ENCODE measurements at regions of chr1 and their contacts with region 1.

Region 1: GRCh38 chr1:156096640-156097391 is 14.6 kb upstream of the MEX3A start:
- DNase-seq: peak; percentile 77 to 91 (median 80)
- ATAC-seq: peak; percentile 87
- H3K4me3 ChIP-seq: peak overlapping the region; percentile 10
- H3K4me3 Mint-ChIP-seq: peak overlapping the region; percentile 31 to 83 (median 72)
- H3K27ac ChIP-seq: peak overlapping the region; percentile 63
- H3K27ac Mint-ChIP-seq: peak overlapping the region; percentile 76 to 95 (median 91)
- H3K4me1 ChIP-seq: peaks cover 18 to 22% of the 10 kb centered on the region in 2 donors
- H3K4me1 Mint-ChIP-seq: peaks cover 18 to 45% (median 26%) of the 10 kb centered on the region in 7 donors
- H3K27me3 ChIP-seq: no peaks in the 10 kb centered on the region
- H3K27me3 Mint-ChIP-seq: peaks cover 0 to 52% (median 0%) of the 10 kb centered on the region in 5 donors

Region 2: DNA sequence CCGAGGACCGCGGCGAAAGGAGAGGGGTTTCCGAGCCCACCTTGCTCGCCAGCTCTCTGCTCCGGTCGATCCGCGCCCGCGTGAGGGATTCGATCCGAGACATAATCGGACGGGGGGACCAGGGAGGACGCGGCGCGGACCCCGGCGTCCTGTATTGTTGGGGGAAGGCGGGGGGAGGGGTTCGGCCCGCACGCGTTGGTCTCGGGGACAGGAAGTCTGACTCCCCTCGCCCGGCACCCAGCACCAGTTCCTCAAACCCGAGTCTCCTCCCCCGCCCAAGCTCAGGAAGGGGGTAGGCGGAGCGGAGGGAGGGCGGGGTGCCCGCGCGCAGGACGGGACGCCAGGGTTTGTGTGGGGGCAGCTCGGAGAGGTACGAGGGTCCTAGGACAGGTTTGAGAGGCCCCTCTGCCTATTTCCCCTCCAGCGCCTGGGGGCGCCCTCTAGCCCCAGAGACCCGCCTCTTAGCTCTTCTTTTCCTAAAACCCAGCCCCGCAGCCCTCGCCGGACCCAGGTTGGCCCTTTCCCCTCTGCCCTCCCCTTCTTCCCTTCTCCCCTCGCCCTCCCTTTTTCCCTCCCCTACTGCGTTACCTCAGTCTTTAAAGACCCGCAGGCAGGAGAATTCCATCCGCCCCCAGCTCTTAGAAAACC is 118.4 kb before region 1 on chr1 and contains the start of gene ARHGEF2:
- CTCF ChIA-PET with region 1: no interaction called
- POLR2A ChIA-PET with region 1: no interaction called
- intact Hi-C with region 1: no loop called
- DNase-seq: peak; percentile 49 to 81 (median 68)
- ATAC-seq: peak; percentile 78
- H3K4me3 ChIP-seq: peak within 1 kb of the TSS; percentile 74
- H3K4me3 Mint-ChIP-seq: peak within 1 kb of the TSS; percentile 89 to 98 (median 94)
- H3K27ac ChIP-seq: peak within 1 kb of the TSS; percentile 90
- H3K27ac Mint-ChIP-seq: peak within 1 kb of the TSS; percentile 77 to 98 (median 95)
- H3K4me1 ChIP-seq: peaks cover 55 to 58% of the 10 kb centered on the region in 2 donors
- H3K4me1 Mint-ChIP-seq: peaks cover 59 to 79% (median 69%) of the 10 kb centered on the region in 7 donors
- H3K27me3 ChIP-seq: no peaks in the 10 kb centered on the region
- H3K27me3 Mint-ChIP-seq: no peaks in the 10 kb centered on the region
- total RNA-seq, gene ARHGEF2: 108 to 236 (median 182) TPM

Region 3: GRCh38 chr1:156106624-156107488 is 10.0 kb after region 1 on chr1:
- CTCF ChIA-PET with region 1: interaction called, 5 read pairs
- POLR2A ChIA-PET with region 1: interaction called, 5 read pairs
- intact Hi-C with region 1: loop called (anchors 1 kb)
- DNase-seq: peak in 1 of 9 donors; percentile 52
- ATAC-seq: no peak
- H3K4me3 ChIP-seq: peak overlapping the region; percentile 39
- H3K4me3 Mint-ChIP-seq: peak overlapping the region; percentile 39 to 85 (median 74)
- H3K27ac ChIP-seq: peak overlapping the region; percentile 73
- H3K27ac Mint-ChIP-seq: peak overlapping the region; percentile 88 to 99 (median 96)
- H3K4me1 ChIP-seq: peaks cover 12 to 38% of the 10 kb centered on the region in 2 donors
- H3K4me1 Mint-ChIP-seq: peaks cover 12 to 45% (median 25%) of the 10 kb centered on the region in 7 donors
- H3K27me3 ChIP-seq: peaks cover 0 to 2% of the 10 kb centered on the region in 2 donors
- H3K27me3 Mint-ChIP-seq: peaks cover 0 to 54% (median 0%) of the 10 kb centered on the region in 5 donors

Region 4: GRCh38 chr1:156114101-156114916 is 17.5 kb after region 1 on chr1 and contains the start of gene LMNA:
- CTCF ChIA-PET with region 1: interaction called, 5 read pairs
- POLR2A ChIA-PET with region 1: interaction called, 9 read pairs
- intact Hi-C with region 1: loop called in 1 of 2 experiments (anchors 2 kb)
- DNase-seq: peak in 3 of 9 donors; percentile 51 to 75 (median 62)
- ATAC-seq: peak; percentile 86
- H3K4me3 ChIP-seq: peak within 1 kb of the TSS; percentile 70
- H3K4me3 Mint-ChIP-seq: peak within 1 kb of the TSS; percentile 79 to 91 (median 86)
- H3K27ac ChIP-seq: peak within 1 kb of the TSS; percentile 9
- H3K27ac Mint-ChIP-seq: peak within 1 kb of the TSS in 7 of 9 donors; percentile 2 to 92 (median 71)
- H3K4me1 ChIP-seq: peaks cover 8 to 14% of the 10 kb centered on the region in 2 donors
- H3K4me1 Mint-ChIP-seq: peaks cover 8 to 31% (median 20%) of the 10 kb centered on the region in 7 donors
- H3K27me3 ChIP-seq: peaks cover 0 to 14% of the 10 kb centered on the region in 2 donors
- H3K27me3 Mint-ChIP-seq: peaks cover 29 to 63% (median 37%) of the 10 kb centered on the region in 5 donors
- total RNA-seq, gene LMNA: 5.5 to 470 (median 18.0) TPM

Region 5: DNA sequence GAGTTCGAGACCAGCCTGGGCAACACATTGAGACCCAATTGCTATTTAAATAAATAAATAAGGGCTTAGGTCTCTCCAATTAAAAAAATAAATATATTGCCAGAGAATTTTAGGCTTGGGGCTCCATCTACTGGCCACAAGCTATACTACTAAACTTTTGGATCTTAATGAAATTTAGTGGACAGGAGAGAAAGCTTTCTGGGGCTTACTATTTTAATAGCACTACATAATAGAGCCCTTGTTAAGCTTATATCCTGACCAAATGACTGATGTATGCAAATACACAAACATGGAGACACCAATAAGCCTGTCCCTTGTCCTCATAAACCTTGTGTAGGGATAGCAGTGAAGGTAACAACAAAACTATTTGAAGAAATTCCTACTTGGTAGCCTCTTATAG is 222.8 kb after region 1 on chr1:
- CTCF ChIA-PET with region 1: no interaction called
- POLR2A ChIA-PET with region 1: no interaction called
- intact Hi-C with region 1: loop called in 1 of 2 experiments (anchors 2 kb)
- DNase-seq: peak in 3 of 9 donors; percentile 16 to 25 (median 23)
- ATAC-seq: no peak
- H3K4me3 ChIP-seq: no peak overlapping the region
- H3K4me3 Mint-ChIP-seq: no peak overlapping the region
- H3K27ac ChIP-seq: no peak overlapping the region
- H3K27ac Mint-ChIP-seq: no peak overlapping the region
- H3K4me1 ChIP-seq: no peaks in the 10 kb centered on the region
- H3K4me1 Mint-ChIP-seq: peaks cover 0 to 1% (median 0%) of the 10 kb centered on the region in 7 donors
- H3K27me3 ChIP-seq: no peaks in the 10 kb centered on the region
- H3K27me3 Mint-ChIP-seq: no peaks in the 10 kb centered on the region

Measured in naive thymus-derived CD4-positive, alpha-beta T cell (primary cell).